CD4-positive, alpha-beta T cell (primary cell): ENCODE measurements at regions of chr4 and their contacts with region 1.

Region 1: GRCh38 chr4:153153339-153153871 is 50.8 kb upstream of the TRIM2 start:
- DNase-seq: peak; percentile 49 to 93 (median 74)
- ATAC-seq: peak; percentile 89
- H3K4me3 ChIP-seq: peak overlapping the region; percentile 68
- H3K4me3 Mint-ChIP-seq: peak overlapping the region; percentile 95
- H3K27ac ChIP-seq: peak overlapping the region in 1 of 2 donors; percentile 67
- H3K27ac Mint-ChIP-seq: peak overlapping the region; percentile 92
- H3K4me1 ChIP-seq: peaks cover 30% of the 10 kb centered on the region
- H3K4me1 Mint-ChIP-seq: peaks cover 50% of the 10 kb centered on the region
- H3K27me3 ChIP-seq: no peaks in the 10 kb centered on the region
- H3K27me3 Mint-ChIP-seq: no peaks in the 10 kb centered on the region
- CTCF ChIP-seq: no peak

Region 2: GRCh38 chr4:152719801-152720556 is 433.4 kb before region 1 on chr4:
- CTCF ChIA-PET with region 1: no interaction called
- POLR2A ChIA-PET with region 1: no interaction called
- intact Hi-C with region 1: no loop called
- DNase-seq: no peak
- ATAC-seq: no peak
- H3K4me3 ChIP-seq: no peak overlapping the region
- H3K4me3 Mint-ChIP-seq: no peak overlapping the region
- H3K27ac ChIP-seq: no peak overlapping the region
- H3K27ac Mint-ChIP-seq: no peak overlapping the region
- H3K4me1 ChIP-seq: no peaks in the 10 kb centered on the region
- H3K4me1 Mint-ChIP-seq: no peaks in the 10 kb centered on the region
- H3K27me3 ChIP-seq: no peaks in the 10 kb centered on the region
- H3K27me3 Mint-ChIP-seq: no peaks in the 10 kb centered on the region
- CTCF ChIP-seq: no peak

Region 3: DNA sequence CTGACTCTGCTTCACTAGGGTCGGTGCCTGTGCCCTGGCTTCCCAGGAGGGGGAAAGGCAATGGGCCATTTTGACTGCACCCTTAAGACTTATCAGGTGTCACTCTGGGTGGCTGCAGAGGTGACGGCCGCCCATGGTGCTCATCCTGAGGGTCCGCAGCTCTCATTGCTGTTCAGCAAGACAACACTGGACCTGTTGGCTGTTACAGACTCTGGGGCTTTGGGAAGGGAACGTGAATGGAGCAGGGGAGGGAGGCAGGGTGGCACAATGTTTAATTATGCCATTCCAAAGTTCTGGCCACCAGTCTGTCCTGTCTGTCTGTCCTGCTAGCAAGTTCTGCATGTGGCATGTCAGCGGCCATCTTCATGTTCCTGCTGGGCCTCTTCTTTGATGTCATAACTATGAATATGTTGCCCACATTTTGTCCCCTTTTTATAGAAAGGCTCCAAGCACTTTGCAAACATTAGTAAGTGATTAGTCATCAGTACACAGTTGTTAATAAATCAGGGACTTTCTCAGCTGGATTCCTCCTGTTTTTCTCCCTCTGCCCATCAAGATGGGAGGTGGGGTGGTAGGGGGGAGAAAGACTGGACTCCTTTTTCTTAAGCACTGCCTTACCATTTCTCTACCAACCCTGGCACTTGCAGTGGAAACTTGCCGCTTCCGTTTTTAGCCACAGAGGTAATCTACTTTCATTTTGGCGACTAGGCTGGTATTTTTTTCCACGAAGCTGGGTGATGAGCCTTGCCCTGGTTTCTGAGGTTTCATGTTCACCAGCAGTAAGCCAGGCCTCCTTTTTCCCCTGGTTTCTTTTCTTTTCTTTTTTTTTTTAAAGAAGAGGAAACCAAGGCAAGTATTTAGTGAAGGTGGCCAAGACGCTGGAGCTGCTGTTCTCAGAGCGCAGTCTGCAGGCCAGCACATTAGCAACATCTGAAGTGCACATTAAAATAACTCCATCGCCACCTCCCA is 37.8 kb before region 1 on chr4:
- CTCF ChIA-PET with region 1: no interaction called
- POLR2A ChIA-PET with region 1: interaction called, 11 read pairs
- intact Hi-C with region 1: no loop called
- DNase-seq: peak; percentile 43 to 92 (median 62)
- ATAC-seq: peak; percentile 54
- H3K4me3 ChIP-seq: peak overlapping the region; percentile 20
- H3K4me3 Mint-ChIP-seq: no peak overlapping the region
- H3K27ac ChIP-seq: peak overlapping the region; percentile 66
- H3K27ac Mint-ChIP-seq: no peak overlapping the region
- H3K4me1 ChIP-seq: peaks cover 66% of the 10 kb centered on the region
- H3K4me1 Mint-ChIP-seq: peaks cover 15% of the 10 kb centered on the region
- H3K27me3 ChIP-seq: no peaks in the 10 kb centered on the region
- H3K27me3 Mint-ChIP-seq: no peaks in the 10 kb centered on the region
- CTCF ChIP-seq: no peak

Region 4: GRCh38 chr4:153204247-153205027 is 51.0 kb after region 1 on chr4 and contains the start of gene TRIM2:
- CTCF ChIA-PET with region 1: no interaction called
- POLR2A ChIA-PET with region 1: no interaction called
- intact Hi-C with region 1: loop called in 1 of 2 experiments (anchors 5 kb)
- DNase-seq: peak in 1 of 14 experiments; percentile 6
- ATAC-seq: no peak
- H3K4me3 ChIP-seq: peak within 1 kb of the TSS; percentile 44
- H3K4me3 Mint-ChIP-seq: peak within 1 kb of the TSS; percentile 71
- H3K27ac ChIP-seq: peak within 1 kb of the TSS in 1 of 2 donors; percentile 30
- H3K27ac Mint-ChIP-seq: peak within 1 kb of the TSS; percentile 83
- H3K4me1 ChIP-seq: peaks cover 34% of the 10 kb centered on the region
- H3K4me1 Mint-ChIP-seq: peaks cover 34% of the 10 kb centered on the region
- H3K27me3 ChIP-seq: no peaks in the 10 kb centered on the region
- H3K27me3 Mint-ChIP-seq: no peaks in the 10 kb centered on the region
- CTCF ChIP-seq: no peak
- total RNA-seq, gene TRIM2: 1.9 to 3.4 TPM

Region 5: GRCh38 chr4:153241970-153242838 is 88.8 kb after region 1 on chr4:
- CTCF ChIA-PET with region 1: no interaction called
- POLR2A ChIA-PET with region 1: no interaction called
- intact Hi-C with region 1: loop called (anchors 5 kb)
- DNase-seq: no peak
- ATAC-seq: no peak
- H3K4me3 ChIP-seq: no peak overlapping the region
- H3K4me3 Mint-ChIP-seq: no peak overlapping the region
- H3K27ac ChIP-seq: no peak overlapping the region
- H3K27ac Mint-ChIP-seq: no peak overlapping the region
- H3K4me1 ChIP-seq: no peaks in the 10 kb centered on the region
- H3K4me1 Mint-ChIP-seq: peaks cover 5% of the 10 kb centered on the region
- H3K27me3 ChIP-seq: no peaks in the 10 kb centered on the region
- H3K27me3 Mint-ChIP-seq: no peaks in the 10 kb centered on the region
- CTCF ChIP-seq: no peak

Region 6: GRCh38 chr4:153249199-153250041 is 96.0 kb after region 1 on chr4:
- CTCF ChIA-PET with region 1: interaction called, 3 read pairs
- POLR2A ChIA-PET with region 1: no interaction called
- intact Hi-C with region 1: loop called (anchors 5 kb)
- DNase-seq: peak; percentile 67 to 96 (median 82)
- ATAC-seq: peak; percentile 97
- H3K4me3 ChIP-seq: peak overlapping the region; percentile 72
- H3K4me3 Mint-ChIP-seq: peak overlapping the region; percentile 93
- H3K27ac ChIP-seq: peak overlapping the region; percentile 81 to 85
- H3K27ac Mint-ChIP-seq: peak overlapping the region; percentile 85
- H3K4me1 ChIP-seq: peaks cover 20% of the 10 kb centered on the region
- H3K4me1 Mint-ChIP-seq: peaks cover 34% of the 10 kb centered on the region
- H3K27me3 ChIP-seq: no peaks in the 10 kb centered on the region
- H3K27me3 Mint-ChIP-seq: no peaks in the 10 kb centered on the region
- CTCF ChIP-seq: no peak